ENCODE measurements at regions of chr3 and their contacts with region 1.

Region 1: GRCh38 chr3:12175844-12176453 is 17.2 kb upstream of the TIMP4 start:
- DNase-seq: no peak
- H3K4me3 ChIP-seq: no peak overlapping the region
- H3K27me3 ChIP-seq: no peaks in the 10 kb centered on the region
- CTCF ChIP-seq: peak; percentile 86

Region 2: DNA sequence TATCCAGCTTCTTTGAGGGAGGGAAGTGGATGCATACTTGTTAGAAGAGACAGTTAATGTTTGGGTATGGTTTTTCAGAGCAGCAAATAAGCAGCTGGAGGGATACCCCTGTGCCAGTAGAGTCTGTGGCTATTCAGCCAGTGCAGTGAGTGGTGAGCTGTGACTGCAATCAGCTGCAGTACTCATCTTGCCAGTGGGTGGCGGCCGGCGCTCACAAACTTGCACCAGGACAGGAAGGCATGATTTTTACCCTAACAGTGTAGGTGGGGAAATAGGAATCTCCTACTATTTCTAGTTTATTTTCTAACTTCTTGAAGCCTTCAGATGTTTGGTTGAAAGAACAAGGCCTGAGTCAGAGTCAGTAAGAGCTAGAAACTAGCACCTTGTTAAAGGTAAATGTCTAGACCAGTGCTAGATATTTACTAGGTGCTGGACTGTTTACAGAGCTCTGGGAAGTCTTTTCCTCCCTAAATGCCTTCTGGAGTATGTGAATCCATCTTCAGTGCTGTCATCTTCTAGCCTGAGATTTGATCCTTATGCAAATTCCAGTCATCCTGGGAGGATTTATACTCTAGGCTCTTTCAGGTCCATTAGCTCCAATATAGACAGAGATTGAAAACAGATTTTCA is 40.8 kb before region 1 on chr3:
- CTCF ChIA-PET with region 1: interaction called, 162 read pairs
- POLR2A ChIA-PET with region 1: no interaction called
- DNase-seq: no peak
- H3K4me3 ChIP-seq: no peak overlapping the region
- H3K27me3 ChIP-seq: peaks cover 6% of the 10 kb centered on the region; the same call in 1 of the 2 replicates
- CTCF ChIP-seq: peak; percentile 94

Region 3: GRCh38 chr3:12143949-12144504 is 31.9 kb before region 1 on chr3:
- CTCF ChIA-PET with region 1: interaction called, 162 read pairs
- POLR2A ChIA-PET with region 1: interaction called, 5 read pairs
- DNase-seq: no peak
- H3K4me3 ChIP-seq: no peak overlapping the region
- H3K27me3 ChIP-seq: peaks cover 3% of the 10 kb centered on the region; the same call in 1 of the 2 replicates
- CTCF ChIP-seq: no peak

Region 4: GRCh38 chr3:12155823-12156222 is 20.1 kb before region 1 on chr3:
- CTCF ChIA-PET with region 1: interaction called, 20 read pairs
- POLR2A ChIA-PET with region 1: interaction called, 11 read pairs
- DNase-seq: no peak
- H3K4me3 ChIP-seq: no peak overlapping the region
- H3K27me3 ChIP-seq: peaks cover 6% of the 10 kb centered on the region
- CTCF ChIP-seq: no peak

Region 5: DNA sequence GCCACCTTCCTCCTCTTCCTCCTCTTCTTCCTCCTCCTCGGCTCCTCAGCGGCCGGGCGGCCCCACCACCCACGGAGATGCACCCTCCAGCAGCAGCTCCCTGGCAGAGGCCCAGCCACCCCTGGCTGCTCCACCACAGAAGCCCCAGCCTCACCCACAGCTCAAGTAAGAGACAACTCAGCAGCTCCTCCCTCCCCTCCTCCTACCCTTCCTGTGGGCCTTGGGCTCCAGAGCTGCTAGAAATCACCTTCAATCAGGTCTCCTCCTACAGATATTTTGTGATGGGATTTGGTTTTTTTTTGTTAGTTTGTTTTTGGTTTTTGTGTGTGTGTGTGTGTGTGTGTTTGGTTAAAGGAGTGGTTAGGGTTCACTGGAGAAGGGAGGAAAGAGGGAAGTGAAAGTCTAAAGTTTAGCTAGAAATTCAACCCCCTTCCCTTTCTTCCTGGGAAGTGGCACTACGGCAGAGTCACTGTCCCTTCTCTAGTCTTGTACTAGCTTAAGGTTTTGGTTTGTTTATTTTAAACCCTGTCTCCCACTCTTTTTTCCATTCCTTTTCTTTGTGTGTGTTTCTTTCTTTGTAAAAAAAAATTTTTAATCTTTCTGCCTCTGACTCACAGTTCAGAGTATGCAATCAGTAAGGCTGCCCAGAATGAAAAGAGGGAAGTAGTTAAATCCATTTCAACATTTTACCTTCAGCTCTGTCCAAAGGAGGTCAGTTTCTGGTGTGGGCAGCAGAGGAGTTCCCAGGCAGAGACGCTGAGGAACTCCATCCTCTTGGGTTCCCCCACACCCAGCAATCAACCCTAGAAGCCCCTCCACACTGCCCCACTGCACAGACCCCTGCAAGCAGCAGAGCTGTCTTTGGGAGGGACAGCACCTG is 11.7 kb after region 1 on chr3:
- CTCF ChIA-PET with region 1: interaction called, 37 read pairs
- POLR2A ChIA-PET with region 1: no interaction called
- DNase-seq: no peak
- H3K4me3 ChIP-seq: no peak overlapping the region
- H3K27me3 ChIP-seq: no peaks in the 10 kb centered on the region
- CTCF ChIP-seq: no peak

Region 6: DNA sequence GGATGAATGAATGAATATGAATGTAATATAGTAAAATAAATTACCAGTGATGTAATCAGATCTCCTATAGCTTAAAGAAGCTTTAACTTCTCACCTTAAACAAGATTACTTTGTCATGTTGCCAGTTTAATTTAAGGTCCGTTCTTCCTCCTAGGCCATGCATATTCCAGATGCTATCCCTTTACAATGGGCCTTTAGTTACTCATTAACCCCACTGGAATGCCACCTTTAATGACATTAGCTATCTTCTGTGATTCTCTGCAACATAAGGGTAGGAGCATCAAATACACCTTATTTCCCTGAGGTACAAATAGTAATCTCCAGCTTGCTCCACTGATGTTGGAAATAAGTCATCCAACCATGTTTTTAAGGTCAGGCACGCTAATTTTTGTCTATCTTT is 45.7 kb after region 1 on chr3:
- CTCF ChIA-PET with region 1: no interaction called
- POLR2A ChIA-PET with region 1: no interaction called
- DNase-seq: no peak
- H3K4me3 ChIP-seq: no peak overlapping the region
- H3K27me3 ChIP-seq: 0 out of 2 replicates have a peak, but pooled peaks cover 1% of the 10 kb centered on the region
- CTCF ChIP-seq: no peak

Region 7: DNA sequence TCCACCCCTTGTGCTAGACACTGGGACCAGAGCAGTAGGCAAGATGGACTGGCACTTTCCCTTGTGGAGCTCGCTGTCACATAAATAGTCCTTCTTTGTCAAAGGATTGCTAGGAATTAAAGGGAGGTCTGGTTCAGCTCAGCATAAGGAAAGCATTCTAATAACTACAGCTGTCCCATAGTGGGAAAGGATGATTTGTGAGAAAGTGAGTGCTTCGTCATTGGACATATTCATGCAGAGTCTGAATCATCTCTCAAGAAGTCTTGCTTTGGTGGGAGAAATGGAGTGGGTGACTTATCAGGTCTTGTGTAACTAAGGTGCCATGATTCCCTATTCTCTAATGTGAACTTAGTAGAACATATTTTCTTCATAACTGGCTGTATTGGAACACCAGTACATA is 127.6 kb after region 1 on chr3:
- CTCF ChIA-PET with region 1: no interaction called
- POLR2A ChIA-PET with region 1: no interaction called
- DNase-seq: peak; percentile 59
- H3K4me3 ChIP-seq: no peak overlapping the region
- H3K27me3 ChIP-seq: no peaks in the 10 kb centered on the region
- CTCF ChIP-seq: no peak

Region 8: GRCh38 chr3:12484198-12484974 is 308.4 kb after region 1 on chr3 and contains the start of gene TSEN2:
- CTCF ChIA-PET with region 1: interaction called, 67 read pairs
- POLR2A ChIA-PET with region 1: no interaction called
- DNase-seq: no peak
- H3K4me3 ChIP-seq: peak within 1 kb of the TSS; percentile 70
- H3K27me3 ChIP-seq: no peaks in the 10 kb centered on the region
- CTCF ChIP-seq: peak; percentile 41
- polyA plus RNA-seq, gene TSEN2: 8.0 and 9.2 TPM in 2 replicates

Measured in BJ (cell line).